ENCODE measurements at regions of chr2 and their contacts with region 1.

Region 1: GRCh38 chr2:11344342-11344955 is at the start of gene ROCK2:
- DNase-seq: peak; percentile 87 to 91 (median 90)
- ATAC-seq: peak; percentile 72
- H3K4me3 ChIP-seq: peak within 1 kb of the TSS; percentile 87
- H3K27ac ChIP-seq: peak within 1 kb of the TSS; percentile 90
- H3K4me1 ChIP-seq: peaks cover 14 to 22% of the 10 kb centered on the region in 2 experiments
- H3K27me3 ChIP-seq: no peaks in the 10 kb centered on the region
- CTCF ChIP-seq: no peak
- EP300 ChIP-seq: no peak
- POLR2A ChIP-seq: peak; percentile 70
- RAD21 ChIP-seq: no peak
- polyA plus RNA-seq, gene ROCK2: 4.9 to 6.0 TPM

Region 2: DNA sequence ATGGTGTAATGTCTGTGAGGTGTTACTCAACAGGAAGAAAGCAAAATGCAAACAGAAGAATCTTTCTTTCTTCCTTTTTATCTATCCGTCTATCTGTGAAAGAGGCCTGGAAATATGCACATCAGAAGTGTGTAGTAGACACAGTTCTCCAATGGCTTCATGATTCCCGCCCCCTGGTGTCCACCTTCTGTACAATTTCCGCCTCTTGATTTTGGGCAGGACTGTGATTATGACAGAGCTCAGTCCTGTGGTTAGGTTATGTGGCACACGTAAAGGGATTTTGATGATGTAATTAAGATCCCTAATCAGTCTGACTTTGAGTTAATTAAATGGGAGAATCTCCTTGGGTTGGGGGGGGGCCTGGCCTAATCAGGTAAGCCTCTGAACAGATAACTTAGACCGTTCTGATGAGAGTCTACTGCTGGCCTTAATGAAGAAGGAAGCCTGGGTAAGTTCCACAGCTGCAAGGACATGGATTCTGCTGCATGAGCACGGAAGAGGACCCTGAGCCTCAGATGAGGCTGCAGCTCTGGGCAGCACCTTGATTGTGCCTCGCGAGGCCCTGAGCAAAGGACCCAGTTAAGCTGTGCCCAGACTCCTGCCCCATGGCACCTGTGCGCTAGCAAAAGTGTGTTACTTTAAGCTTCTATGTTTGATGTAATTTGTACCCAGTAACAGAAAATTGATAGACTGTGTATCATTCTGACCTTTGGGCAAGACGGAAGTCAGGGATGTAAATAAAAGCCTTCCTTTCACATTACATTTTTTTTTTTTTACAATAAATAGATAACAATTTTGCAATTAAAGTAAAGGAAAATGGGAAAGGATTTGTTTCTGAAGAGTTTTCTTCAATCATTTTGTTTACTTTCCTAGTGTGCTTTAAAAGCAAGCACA is 444.0 kb before region 1 on chr2:
- CTCF ChIA-PET with region 1: no interaction called
- POLR2A ChIA-PET with region 1: no interaction called
- in situ Hi-C with region 1: no loop called
- intact Hi-C with region 1: no loop called
- DNase-seq: peak; percentile 40 to 52 (median 46)
- ATAC-seq: peak; percentile 84
- H3K4me3 ChIP-seq: no peak overlapping the region
- H3K27ac ChIP-seq: no peak overlapping the region
- H3K4me1 ChIP-seq: no peaks in the 10 kb centered on the region
- H3K27me3 ChIP-seq: peaks cover 7 to 14% of the 10 kb centered on the region in 2 experiments; a peak in 4 of 5 replicates
- CTCF ChIP-seq: peak; percentile 46 to 59 (median 59); a peak in 4 of 6 replicates
- EP300 ChIP-seq: no peak
- POLR2A ChIP-seq: no peak
- RAD21 ChIP-seq: peak in 1 of 2 experiments; percentile 41; a peak in 2 of 4 replicates

Region 3: GRCh38 chr2:11154923-11155380 is 189.5 kb before region 1 on chr2:
- CTCF ChIA-PET with region 1: no interaction called
- POLR2A ChIA-PET with region 1: interaction called, 4 read pairs
- in situ Hi-C with region 1: no loop called
- intact Hi-C with region 1: loop called (anchors 5 kb)
- DNase-seq: peak; percentile 96 to 100 (median 100)
- ATAC-seq: peak; percentile 91
- H3K4me3 ChIP-seq: peak overlapping the region; percentile 71
- H3K27ac ChIP-seq: peak overlapping the region; percentile 74
- H3K4me1 ChIP-seq: peaks cover 13 to 41% of the 10 kb centered on the region in 2 experiments; a peak in 4 of 5 replicates
- H3K27me3 ChIP-seq: no peaks in the 10 kb centered on the region
- CTCF ChIP-seq: no peak
- EP300 ChIP-seq: no peak
- POLR2A ChIP-seq: peak; percentile 72
- RAD21 ChIP-seq: no peak

Region 4: DNA sequence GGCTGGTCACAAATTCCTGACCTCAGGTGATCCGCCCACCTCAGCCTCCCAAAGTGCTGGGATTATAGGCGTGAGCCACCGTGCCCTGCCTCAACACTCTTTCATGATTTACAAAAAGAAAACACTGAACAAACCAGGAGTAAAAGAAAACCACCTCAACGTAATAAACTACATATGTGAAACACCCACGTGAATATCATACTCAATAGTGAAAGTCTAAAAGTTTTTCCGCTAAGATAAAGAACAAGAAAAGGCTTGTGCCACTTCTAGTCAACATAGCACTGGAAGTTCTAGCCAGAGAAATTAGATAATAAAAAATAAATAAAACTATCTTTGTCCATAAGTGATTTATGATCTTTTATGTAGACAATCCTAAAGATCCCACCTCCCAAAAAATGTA is 68.5 kb before region 1 on chr2:
- CTCF ChIA-PET with region 1: no interaction called
- POLR2A ChIA-PET with region 1: no interaction called
- in situ Hi-C with region 1: no loop called
- intact Hi-C with region 1: loop called (anchors 5 kb)
- DNase-seq: no peak
- ATAC-seq: no peak
- H3K4me3 ChIP-seq: no peak overlapping the region
- H3K27ac ChIP-seq: no peak overlapping the region
- H3K4me1 ChIP-seq: peaks cover 12 to 16% of the 10 kb centered on the region in 2 experiments
- H3K27me3 ChIP-seq: no peaks in the 10 kb centered on the region
- CTCF ChIP-seq: no peak
- EP300 ChIP-seq: no peak
- POLR2A ChIP-seq: no peak
- RAD21 ChIP-seq: no peak

Region 5: GRCh38 chr2:11357428-11357972 is 13.1 kb after region 1 on chr2:
- CTCF ChIA-PET with region 1: no interaction called
- POLR2A ChIA-PET with region 1: interaction called, 19 read pairs
- in situ Hi-C with region 1: no loop called
- intact Hi-C with region 1: no loop called
- DNase-seq: no peak
- ATAC-seq: peak; percentile 19
- H3K4me3 ChIP-seq: no peak overlapping the region
- H3K27ac ChIP-seq: no peak overlapping the region
- H3K4me1 ChIP-seq: no peaks in the 10 kb centered on the region; a peak in 1 of 5 replicates
- H3K27me3 ChIP-seq: no peaks in the 10 kb centered on the region
- CTCF ChIP-seq: no peak
- EP300 ChIP-seq: no peak
- POLR2A ChIP-seq: no peak
- RAD21 ChIP-seq: no peak

Region 6: GRCh38 chr2:11389551-11390528 is 45.4 kb after region 1 on chr2:
- CTCF ChIA-PET with region 1: no interaction called
- POLR2A ChIA-PET with region 1: no interaction called
- in situ Hi-C with region 1: no loop called
- intact Hi-C with region 1: no loop called
- DNase-seq: no peak
- ATAC-seq: no peak
- H3K4me3 ChIP-seq: no peak overlapping the region
- H3K27ac ChIP-seq: no peak overlapping the region
- H3K4me1 ChIP-seq: peaks cover 4 to 15% of the 10 kb centered on the region in 2 experiments; a peak in 3 of 5 replicates
- H3K27me3 ChIP-seq: no peaks in the 10 kb centered on the region
- CTCF ChIP-seq: no peak
- EP300 ChIP-seq: no peak
- POLR2A ChIP-seq: no peak
- RAD21 ChIP-seq: no peak

Measured in K562 (cell line).